Activated CD4-positive, alpha-beta memory T cell treated with anti-CD3 and anti-CD28 coated beads for 36 hours (primary cell): ENCODE measurements at regions of chr6 and their contacts with region 1.

Region 1: DNA sequence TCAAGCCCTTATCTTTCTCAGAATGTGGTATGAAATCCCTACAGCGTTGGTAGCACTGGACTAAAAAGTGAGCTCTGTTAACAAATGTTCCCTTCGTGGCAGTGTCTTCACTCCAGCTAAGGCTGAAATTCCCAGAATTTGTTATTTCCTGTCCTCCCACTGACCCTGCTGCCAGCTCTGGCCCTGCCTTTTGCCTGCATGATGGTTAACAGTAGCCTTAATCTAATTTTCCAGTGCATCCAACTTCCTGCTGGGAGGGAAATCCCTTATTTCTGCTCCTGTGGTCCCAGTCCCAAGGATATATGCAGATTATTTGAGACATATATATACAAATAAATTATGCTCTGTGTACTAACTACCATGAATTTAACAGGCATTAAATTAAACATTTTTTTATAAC is 157.2 kb upstream of the CARMIL1 start:
- DNase-seq: no peak
- H3K4me3 Mint-ChIP-seq: no peak overlapping the region
- H3K27ac Mint-ChIP-seq: no peak overlapping the region
- H3K4me1 Mint-ChIP-seq: peaks cover 54% of the 10 kb centered on the region
- H3K27me3 Mint-ChIP-seq: no peaks in the 10 kb centered on the region

Region 2: GRCh38 chr6:25085756-25086155 is 36.2 kb before region 1 on chr6:
- CTCF ChIA-PET with region 1: no interaction called
- POLR2A ChIA-PET with region 1: no interaction called
- intact Hi-C with region 1: loop called (anchors 5 kb)
- DNase-seq: no peak
- H3K4me3 Mint-ChIP-seq: no peak overlapping the region
- H3K27ac Mint-ChIP-seq: no peak overlapping the region
- H3K4me1 Mint-ChIP-seq: peaks cover 32% of the 10 kb centered on the region
- H3K27me3 Mint-ChIP-seq: no peaks in the 10 kb centered on the region

Region 3: GRCh38 chr6:25100288-25100687 is 21.7 kb before region 1 on chr6:
- CTCF ChIA-PET with region 1: no interaction called
- POLR2A ChIA-PET with region 1: no interaction called
- intact Hi-C with region 1: no loop called
- DNase-seq: no peak
- H3K4me3 Mint-ChIP-seq: no peak overlapping the region
- H3K27ac Mint-ChIP-seq: no peak overlapping the region
- H3K4me1 Mint-ChIP-seq: peaks cover 5% of the 10 kb centered on the region
- H3K27me3 Mint-ChIP-seq: no peaks in the 10 kb centered on the region

Region 4: DNA sequence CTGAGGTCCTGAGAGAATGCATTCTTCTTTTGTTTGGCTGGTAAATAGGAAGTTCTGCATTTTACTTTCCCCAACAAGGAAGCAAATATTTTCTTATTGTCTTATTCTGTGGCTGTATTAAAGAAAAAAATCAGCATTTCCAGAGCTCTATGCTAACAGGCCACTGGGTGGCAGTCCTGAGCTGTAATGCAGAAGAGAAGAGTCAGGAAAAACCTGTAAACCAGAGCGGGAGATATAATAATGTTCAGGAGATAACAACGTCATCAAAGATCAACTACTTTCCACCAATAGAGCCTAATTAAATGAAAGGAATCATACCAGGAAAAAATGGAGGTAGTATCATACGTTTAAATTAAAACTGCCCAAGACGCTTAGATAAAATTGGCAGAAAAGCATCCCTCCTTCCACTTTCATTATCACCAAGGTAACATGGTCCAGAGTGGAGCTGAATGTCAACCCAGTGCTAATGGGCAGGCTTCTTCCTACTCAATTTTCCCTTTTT is 101.5 kb after region 1 on chr6:
- CTCF ChIA-PET with region 1: no interaction called
- POLR2A ChIA-PET with region 1: no interaction called
- intact Hi-C with region 1: no loop called
- DNase-seq: peak; percentile 72
- H3K4me3 Mint-ChIP-seq: peak overlapping the region; percentile 58
- H3K27ac Mint-ChIP-seq: no peak overlapping the region
- H3K4me1 Mint-ChIP-seq: peaks cover 12% of the 10 kb centered on the region
- H3K27me3 Mint-ChIP-seq: peaks cover 2% of the 10 kb centered on the region